ENCODE measurements at regions of chr1 and their contacts with region 1.

Region 1: GRCh38 chr1:28886731-28887418 is 27.5 kb upstream of the EPB41 start:
- DNase-seq: peak; percentile 83 to 93
- ATAC-seq: peak; percentile 73 to 85
- H3K4me3 ChIP-seq: peak overlapping the region; percentile 89
- H3K27ac ChIP-seq: peak overlapping the region; percentile 91 to 96
- H3K4me1 ChIP-seq: peaks cover 37% of the 10 kb centered on the region
- CTCF ChIP-seq: no peak
- EP300 ChIP-seq: no peak
- POLR2A ChIP-seq: no peak
- RAD21 ChIP-seq: no peak

Region 2: DNA sequence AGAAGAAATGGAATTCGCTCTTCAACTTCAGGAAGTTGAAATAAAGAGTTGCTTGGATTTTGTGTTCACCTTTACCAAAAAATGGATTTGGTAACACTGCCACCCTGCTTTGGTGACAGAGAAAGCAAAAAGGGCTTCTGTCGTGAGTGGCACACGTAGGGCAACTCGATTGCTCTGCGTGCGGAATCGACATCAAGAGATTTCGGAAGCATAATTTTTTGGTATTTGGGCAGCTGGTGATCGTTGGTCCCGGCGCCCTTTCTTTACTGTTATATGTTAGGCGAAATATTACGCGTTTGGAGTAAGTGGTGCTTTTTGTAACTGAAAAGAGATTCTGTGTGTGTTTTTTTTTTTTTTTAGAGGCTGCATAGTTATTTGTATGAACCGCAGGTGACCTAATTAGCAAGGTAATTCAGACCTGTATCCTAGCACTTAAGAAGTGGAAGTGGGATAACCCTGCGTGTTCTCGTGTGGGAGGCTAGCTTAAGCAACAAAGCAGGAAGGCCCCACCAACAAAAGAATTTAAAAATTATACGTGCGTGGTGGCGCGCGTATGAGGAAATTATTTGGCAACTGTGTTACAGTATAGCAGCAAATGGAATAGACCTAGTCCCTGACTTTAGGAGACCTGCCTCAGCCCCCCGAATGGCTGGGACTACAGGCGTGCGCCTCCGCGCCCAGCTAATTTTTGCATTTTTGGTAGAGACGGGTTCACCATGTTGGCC is 238.2 kb before region 1 on chr1 and contains the start of gene RNU11:
- CTCF ChIA-PET with region 1: no interaction called
- POLR2A ChIA-PET with region 1: no interaction called
- DNase-seq: peak; percentile 77 to 97
- ATAC-seq: peak; percentile 88 to 93
- H3K4me3 ChIP-seq: peak within 1 kb of the TSS; percentile 40
- H3K27ac ChIP-seq: peak within 1 kb of the TSS; percentile 96 to 97
- H3K4me1 ChIP-seq: peaks cover 15% of the 10 kb centered on the region; the same call in 2 of the 3 replicates
- CTCF ChIP-seq: no peak
- EP300 ChIP-seq: 0 out of 5 replicates have a peak, but pooled peaks of 1 of the 2 experiments have one; percentile 29
- POLR2A ChIP-seq: peak; percentile 99
- RAD21 ChIP-seq: no peak
- polyA plus RNA-seq, gene RNU11: not detected in 2 replicates

Region 3: DNA sequence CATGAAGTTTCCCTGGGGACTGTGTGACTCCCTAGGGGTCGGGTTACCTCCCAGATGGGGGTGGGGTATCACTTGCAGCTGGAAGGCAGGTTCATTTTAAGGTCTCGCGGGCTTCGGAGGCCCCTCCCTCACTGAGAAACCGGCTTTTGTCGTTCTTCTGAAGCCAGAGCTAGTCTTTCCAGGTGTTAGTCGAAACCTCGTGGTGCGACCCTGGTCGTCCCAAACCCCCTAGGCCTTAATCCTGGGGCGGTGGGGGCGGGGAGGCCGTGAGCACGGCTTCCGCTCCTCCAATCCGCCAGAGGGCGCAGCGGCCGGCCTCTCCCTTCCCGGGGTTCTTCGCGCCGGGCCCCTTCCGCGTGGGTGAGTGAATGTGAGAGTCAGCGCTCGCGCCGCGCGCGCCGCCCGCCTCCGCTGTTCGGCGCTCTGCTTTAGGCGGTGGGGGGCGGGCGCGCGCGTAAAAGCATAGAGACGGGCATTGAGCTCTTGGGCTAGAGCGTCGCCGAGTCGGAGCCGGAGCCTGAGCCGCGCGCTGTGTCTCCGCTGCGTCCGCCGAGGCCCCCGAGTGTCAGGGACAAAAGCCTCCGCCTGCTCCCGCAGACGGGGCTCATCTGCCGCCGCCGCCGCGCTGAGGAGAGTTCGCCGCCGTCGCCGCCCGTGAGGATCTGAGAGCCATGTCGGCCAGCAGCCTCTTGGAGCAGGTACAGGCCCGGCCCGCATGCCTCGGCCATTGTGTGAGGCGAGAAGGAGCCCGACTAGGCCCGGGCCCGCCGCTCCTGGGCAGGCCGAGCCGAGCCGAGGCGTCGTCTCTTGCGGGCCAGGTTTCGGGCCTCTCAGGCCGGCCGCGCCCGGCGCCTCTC is 150.2 kb before region 1 on chr1 and contains the start of gene YTHDF2:
- CTCF ChIA-PET with region 1: no interaction called
- POLR2A ChIA-PET with region 1: no interaction called
- DNase-seq: peak; percentile 69 to 95
- ATAC-seq: peak; percentile 96 to 98
- H3K4me3 ChIP-seq: peak within 1 kb of the TSS; percentile 98
- H3K27ac ChIP-seq: peak within 1 kb of the TSS; percentile 98 to 100
- H3K4me1 ChIP-seq: peaks cover 19% of the 10 kb centered on the region; the same call in 2 of the 3 replicates
- CTCF ChIP-seq: peak; percentile 69
- EP300 ChIP-seq: no peak
- POLR2A ChIP-seq: peak; percentile 17; the same call in 1 of the 2 replicates
- RAD21 ChIP-seq: 0 out of 5 replicates have a peak, but pooled peaks of 1 of the 2 experiments have one; percentile 24
- polyA plus RNA-seq, gene YTHDF2: 55.6 and 59.3 TPM in 2 replicates

Region 4: DNA sequence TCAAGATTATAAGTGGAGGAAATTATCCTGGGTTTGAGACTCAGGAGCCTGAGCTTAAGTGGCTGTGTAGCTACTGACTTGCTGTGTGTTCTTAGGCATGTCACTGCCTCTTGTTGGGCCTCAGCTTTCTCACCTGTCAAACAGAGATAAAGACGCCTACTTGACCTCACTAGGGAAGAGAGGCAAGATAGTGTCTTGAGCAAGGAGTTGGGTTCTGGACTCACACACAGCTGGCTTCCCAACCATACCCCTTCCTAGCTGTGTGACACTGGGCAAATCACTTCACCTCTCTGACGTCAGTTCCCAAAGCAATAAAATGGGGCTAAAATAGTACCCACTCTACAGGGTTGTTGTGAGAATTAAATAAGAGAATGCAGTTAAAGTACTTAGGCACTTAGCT is 15.9 kb after region 1 on chr1:
- CTCF ChIA-PET with region 1: interaction called, 11 read pairs
- POLR2A ChIA-PET with region 1: no interaction called
- DNase-seq: no peak
- ATAC-seq: no peak
- H3K4me3 ChIP-seq: no peak overlapping the region
- H3K27ac ChIP-seq: no peak overlapping the region
- H3K4me1 ChIP-seq: no peaks in the 10 kb centered on the region
- CTCF ChIP-seq: no peak
- EP300 ChIP-seq: no peak
- POLR2A ChIP-seq: no peak
- RAD21 ChIP-seq: no peak

Region 5: GRCh38 chr1:29017975-29018712 is 131.3 kb after region 1 on chr1:
- CTCF ChIA-PET with region 1: interaction called, 512 read pairs
- POLR2A ChIA-PET with region 1: no interaction called
- DNase-seq: no peak
- ATAC-seq: no peak
- H3K4me3 ChIP-seq: no peak overlapping the region
- H3K27ac ChIP-seq: no peak overlapping the region
- H3K4me1 ChIP-seq: no peaks in the 10 kb centered on the region
- CTCF ChIP-seq: no peak
- EP300 ChIP-seq: no peak
- POLR2A ChIP-seq: no peak
- RAD21 ChIP-seq: no peak

Region 6: GRCh38 chr1:29033829-29034466 is 147.1 kb after region 1 on chr1:
- CTCF ChIA-PET with region 1: interaction called, 512 read pairs
- POLR2A ChIA-PET with region 1: interaction called, 5 read pairs
- DNase-seq: peak; percentile 38 to 46
- ATAC-seq: peak in 1 of 2 experiments; percentile 58; a peak in 2 of 6 replicates
- H3K4me3 ChIP-seq: no peak overlapping the region
- H3K27ac ChIP-seq: no peak overlapping the region
- H3K4me1 ChIP-seq: no peaks in the 10 kb centered on the region
- CTCF ChIP-seq: peak; percentile 80
- EP300 ChIP-seq: no peak
- POLR2A ChIP-seq: no peak
- RAD21 ChIP-seq: peak; percentile 93 to 94

Region 7: DNA sequence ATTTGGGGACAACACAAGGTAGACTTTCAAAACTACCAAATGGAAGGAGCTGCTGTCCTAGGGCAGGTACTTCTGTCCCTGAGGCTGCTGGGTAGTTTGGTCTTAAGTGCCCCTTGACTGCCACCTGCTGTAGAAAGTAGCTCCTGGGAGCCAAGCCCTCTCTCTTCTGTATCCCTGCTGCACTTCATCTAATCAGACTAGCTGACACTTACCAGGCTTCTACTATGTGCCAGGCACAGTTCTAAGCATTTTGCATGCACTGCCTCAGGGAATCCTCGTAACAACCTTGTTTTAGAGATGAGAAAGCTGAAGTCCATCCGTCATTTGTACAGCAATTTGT is 310.7 kb after region 1 on chr1:
- CTCF ChIA-PET with region 1: interaction called, 23 read pairs
- POLR2A ChIA-PET with region 1: interaction called, 3 read pairs
- DNase-seq: peak; percentile 21 to 64
- ATAC-seq: peak; percentile 93 to 95
- H3K4me3 ChIP-seq: no peak overlapping the region
- H3K27ac ChIP-seq: no peak overlapping the region
- H3K4me1 ChIP-seq: peaks cover 10% of the 10 kb centered on the region
- CTCF ChIP-seq: peak; percentile 35; the same call in 2 of the 3 replicates
- EP300 ChIP-seq: no peak
- POLR2A ChIP-seq: no peak
- RAD21 ChIP-seq: peak; percentile 28 to 44; a peak in 4 of 5 replicates

Region 8: GRCh38 chr1:29202584-29203340 is 315.9 kb after region 1 on chr1:
- CTCF ChIA-PET with region 1: interaction called, 23 read pairs
- POLR2A ChIA-PET with region 1: interaction called, 3 read pairs
- DNase-seq: peak; percentile 88 to 90
- ATAC-seq: peak; percentile 96 to 99
- H3K4me3 ChIP-seq: no peak overlapping the region
- H3K27ac ChIP-seq: peak overlapping the region in 1 of 2 experiments; percentile 65; a peak in 3 of 6 replicates
- H3K4me1 ChIP-seq: peaks cover 6% of the 10 kb centered on the region
- CTCF ChIP-seq: peak; percentile 80
- EP300 ChIP-seq: no peak
- POLR2A ChIP-seq: no peak
- RAD21 ChIP-seq: peak; percentile 83 to 91

Measured in A549 (cell line).